PC-9 (cell line): ENCODE measurements at regions of chr15 and their contacts with region 1.

Region 1: DNA sequence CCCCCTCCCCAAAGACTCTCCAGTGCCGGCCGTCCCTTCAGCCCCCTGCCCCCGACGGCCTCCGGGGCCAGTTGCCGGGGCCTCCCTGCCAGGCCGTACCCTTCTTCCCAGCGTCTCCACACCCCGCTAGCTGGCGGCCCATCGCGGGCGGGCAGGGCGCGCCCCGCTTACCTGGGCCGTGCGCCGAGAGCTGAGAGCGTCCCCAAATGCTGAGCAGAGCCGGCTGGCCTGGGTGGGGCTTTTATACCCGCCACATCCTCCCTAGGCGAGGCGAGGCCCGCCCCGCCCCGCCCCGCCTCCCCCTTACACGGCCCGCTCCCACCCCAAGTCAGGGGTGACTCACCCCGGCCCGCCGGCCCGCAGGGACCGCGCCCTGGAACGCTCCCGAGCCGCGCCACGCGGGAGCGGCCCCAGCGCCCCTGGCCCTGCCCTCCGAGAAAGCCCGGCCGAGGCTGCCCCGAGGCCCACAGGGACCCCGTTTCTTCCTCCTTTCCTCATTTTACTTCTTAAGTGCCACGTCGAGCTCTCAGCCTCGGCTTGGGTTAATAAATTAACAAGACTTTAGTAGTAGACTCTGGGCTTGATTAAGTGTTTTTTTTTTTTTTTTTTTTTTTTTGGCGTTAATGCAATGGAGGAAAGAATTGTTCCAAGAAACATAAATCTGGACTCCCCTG is at the start of gene ANXA2:
- DNase-seq: peak; percentile 54 to 90
- H3K4me3 ChIP-seq: peak within 1 kb of the TSS; percentile 68
- H3K27ac ChIP-seq: peak within 1 kb of the TSS; percentile 94
- H3K4me1 ChIP-seq: peaks cover 51% of the 10 kb centered on the region
- H3K27me3 ChIP-seq: no peaks in the 10 kb centered on the region
- CTCF ChIP-seq: no peak
- total RNA-seq, gene ANXA2: 1,720 and 1,743 TPM in 2 replicates

Region 2: GRCh38 chr15:60006203-60006862 is 391.6 kb before region 1 on chr15:
- CTCF ChIA-PET with region 1: no interaction called
- POLR2A ChIA-PET with region 1: no interaction called
- intact Hi-C with region 1: no loop called
- DNase-seq: peak; percentile 88 to 91
- H3K4me3 ChIP-seq: peak overlapping the region; percentile 82
- H3K27ac ChIP-seq: peak overlapping the region; percentile 95
- H3K4me1 ChIP-seq: peaks cover 28% of the 10 kb centered on the region
- H3K27me3 ChIP-seq: no peaks in the 10 kb centered on the region
- CTCF ChIP-seq: no peak

Region 3: GRCh38 chr15:60374628-60375081 is 23.3 kb before region 1 on chr15:
- CTCF ChIA-PET with region 1: interaction called, 4 read pairs
- POLR2A ChIA-PET with region 1: interaction called, 24 read pairs
- intact Hi-C with region 1: loop called (anchors 1 kb)
- DNase-seq: peak; percentile 90 to 93
- H3K4me3 ChIP-seq: no peak overlapping the region
- H3K27ac ChIP-seq: peak overlapping the region; percentile 97
- H3K4me1 ChIP-seq: peaks cover 56% of the 10 kb centered on the region
- H3K27me3 ChIP-seq: no peaks in the 10 kb centered on the region
- CTCF ChIP-seq: no peak

Region 4: GRCh38 chr15:60408438-60409105 is 10.7 kb after region 1 on chr15:
- CTCF ChIA-PET with region 1: no interaction called
- POLR2A ChIA-PET with region 1: interaction called, 49 read pairs
- intact Hi-C with region 1: loop called (anchors 1 kb)
- DNase-seq: peak in 1 of 2 experiments; percentile 92
- H3K4me3 ChIP-seq: no peak overlapping the region
- H3K27ac ChIP-seq: peak overlapping the region; percentile 90
- H3K4me1 ChIP-seq: peaks cover 39% of the 10 kb centered on the region
- H3K27me3 ChIP-seq: no peaks in the 10 kb centered on the region
- CTCF ChIP-seq: no peak

Region 5: DNA sequence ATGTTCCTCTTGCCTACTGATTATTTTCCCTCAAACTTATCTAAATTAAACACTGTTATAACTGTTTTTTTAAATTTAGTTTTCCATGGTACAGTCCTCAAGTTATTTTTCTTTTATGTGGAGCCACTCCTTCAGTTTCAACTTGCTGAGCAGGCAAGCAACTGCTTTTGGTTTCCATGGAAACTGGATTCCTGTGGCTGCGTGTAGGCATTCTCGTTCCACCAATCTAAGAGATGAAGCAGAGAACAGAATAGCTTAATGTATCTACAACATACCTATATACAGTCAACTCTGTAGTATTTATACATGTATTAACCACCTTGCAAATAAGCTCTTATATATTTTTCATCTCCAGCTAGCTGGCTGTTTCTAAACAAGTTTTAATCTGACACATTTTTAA is 25.6 kb after region 1 on chr15:
- CTCF ChIA-PET with region 1: no interaction called
- POLR2A ChIA-PET with region 1: interaction called, 13 read pairs
- intact Hi-C with region 1: loop called (anchors 1 kb)
- DNase-seq: peak; percentile 60 to 84
- H3K4me3 ChIP-seq: no peak overlapping the region
- H3K27ac ChIP-seq: peak overlapping the region; percentile 55
- H3K4me1 ChIP-seq: peaks cover 20% of the 10 kb centered on the region
- H3K27me3 ChIP-seq: no peaks in the 10 kb centered on the region
- CTCF ChIP-seq: no peak

Region 6: DNA sequence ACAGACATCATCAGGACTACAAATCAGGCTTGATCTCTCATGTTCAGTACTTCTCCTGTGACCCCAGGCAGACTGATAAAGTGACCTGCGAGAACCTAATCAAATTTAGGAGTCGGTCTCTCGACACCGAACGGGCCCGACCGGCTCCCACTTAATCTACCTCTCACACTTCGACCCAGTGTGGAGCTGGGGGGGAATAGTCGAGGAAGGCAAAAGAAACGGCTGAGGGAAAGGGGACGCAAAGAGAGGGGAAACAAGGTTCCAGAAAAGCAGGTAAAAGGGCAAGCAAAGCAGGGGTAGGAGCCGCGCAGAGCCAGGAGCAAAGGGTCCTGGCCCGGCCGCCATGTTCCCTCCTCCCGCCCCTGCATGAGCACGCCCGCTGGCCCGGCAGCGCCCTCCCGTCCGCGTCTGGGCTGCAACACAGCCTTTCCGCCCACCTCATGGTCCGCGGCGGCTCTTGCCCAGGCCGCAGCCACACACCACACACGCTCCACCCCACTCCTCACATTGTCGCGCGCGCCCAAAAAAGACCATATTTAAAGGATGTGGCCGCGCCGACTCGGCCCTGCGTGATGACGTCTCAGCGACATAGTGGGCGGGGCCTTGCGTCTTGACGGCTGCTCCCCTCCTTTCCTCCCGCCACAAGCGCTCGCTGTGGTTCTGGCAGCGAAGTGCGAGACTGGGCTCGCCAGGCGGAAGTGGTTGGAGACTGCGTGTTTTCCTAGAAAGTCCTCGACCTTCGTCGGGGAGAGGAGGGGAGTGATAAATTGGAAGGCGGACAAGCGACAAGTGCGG is 80.9 kb after region 1 on chr15 and contains the start of gene ICE2:
- CTCF ChIA-PET with region 1: no interaction called
- POLR2A ChIA-PET with region 1: interaction called, 5 read pairs
- intact Hi-C with region 1: loop called (anchors 2 kb)
- DNase-seq: peak; percentile 76 to 90
- H3K4me3 ChIP-seq: peak within 1 kb of the TSS; percentile 66
- H3K27ac ChIP-seq: peak within 1 kb of the TSS; percentile 51
- H3K4me1 ChIP-seq: peaks cover 25% of the 10 kb centered on the region
- H3K27me3 ChIP-seq: no peaks in the 10 kb centered on the region
- CTCF ChIP-seq: no peak
- total RNA-seq, gene ICE2: 64.1 and 67.5 TPM in 2 replicates

Region 7: GRCh38 chr15:61025308-61025707 is 627.4 kb after region 1 on chr15:
- CTCF ChIA-PET with region 1: no interaction called
- POLR2A ChIA-PET with region 1: no interaction called
- intact Hi-C with region 1: no loop called
- DNase-seq: no peak
- H3K4me3 ChIP-seq: no peak overlapping the region
- H3K27ac ChIP-seq: no peak overlapping the region
- H3K4me1 ChIP-seq: no peaks in the 10 kb centered on the region
- H3K27me3 ChIP-seq: no peaks in the 10 kb centered on the region
- CTCF ChIP-seq: no peak

Region 8: GRCh38 chr15:61994216-61994615 is 1596.3 kb after region 1 on chr15:
- CTCF ChIA-PET with region 1: no interaction called
- POLR2A ChIA-PET with region 1: interaction called, 10 read pairs
- intact Hi-C with region 1: no loop called
- DNase-seq: no peak
- H3K4me3 ChIP-seq: no peak overlapping the region
- H3K27ac ChIP-seq: no peak overlapping the region
- H3K4me1 ChIP-seq: no peaks in the 10 kb centered on the region
- H3K27me3 ChIP-seq: no peaks in the 10 kb centered on the region
- CTCF ChIP-seq: no peak